A673 (cell line): ENCODE measurements at regions of chr1 and their contacts with region 1.

Region 1: DNA sequence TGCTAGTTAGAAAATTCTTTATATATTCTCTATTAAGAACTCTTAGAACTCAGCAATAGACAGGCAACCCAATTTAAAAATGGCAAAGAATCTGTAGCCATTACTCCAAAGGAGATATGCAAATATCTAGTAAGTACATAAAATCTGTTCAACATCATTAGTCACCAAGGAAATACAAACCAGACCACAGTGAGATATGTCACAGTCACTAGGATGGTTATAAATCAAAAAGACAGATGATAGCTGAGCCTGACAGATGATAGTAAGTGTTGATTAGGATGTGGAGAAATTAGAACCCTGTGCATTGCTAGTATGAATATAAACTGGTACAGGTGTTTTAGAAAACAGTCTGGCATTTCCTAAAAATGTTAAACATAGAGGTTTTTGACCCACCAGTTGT is 26.6 kb downstream of the SRSF11 start:
- DNase-seq: peak; percentile 13
- H3K4me3 ChIP-seq: no peak overlapping the region
- H3K27ac ChIP-seq: no peak overlapping the region
- H3K4me1 ChIP-seq: no peaks in the 10 kb centered on the region
- H3K27me3 ChIP-seq: no peaks in the 10 kb centered on the region
- CTCF ChIP-seq: no peak

Region 2: GRCh38 chr1:71068325-71069240 is 820.8 kb after region 1 on chr1:
- CTCF ChIA-PET with region 1: no interaction called
- POLR2A ChIA-PET with region 1: no interaction called
- intact Hi-C with region 1: loop called (anchors 5 kb)
- DNase-seq: no peak
- H3K4me3 ChIP-seq: no peak overlapping the region
- H3K27ac ChIP-seq: peak overlapping the region; percentile 18
- H3K4me1 ChIP-seq: no peaks in the 10 kb centered on the region
- H3K27me3 ChIP-seq: no peaks in the 10 kb centered on the region
- CTCF ChIP-seq: no peak